ENCODE measurements at regions of chr6 and their contacts with region 1.

Region 1: GRCh38 chr6:131627724-131628682 is at the start of gene MED23:
- DNase-seq: peak; percentile 97
- H3K4me3 Mint-ChIP-seq: peak within 1 kb of the TSS; percentile 99
- H3K27ac Mint-ChIP-seq: peak within 1 kb of the TSS; percentile 85
- H3K4me1 Mint-ChIP-seq: peaks cover 37% of the 10 kb centered on the region
- H3K27me3 Mint-ChIP-seq: no peaks in the 10 kb centered on the region
- total RNA-seq, gene MED23: 25.5 to 26.0 TPM

Region 2: DNA sequence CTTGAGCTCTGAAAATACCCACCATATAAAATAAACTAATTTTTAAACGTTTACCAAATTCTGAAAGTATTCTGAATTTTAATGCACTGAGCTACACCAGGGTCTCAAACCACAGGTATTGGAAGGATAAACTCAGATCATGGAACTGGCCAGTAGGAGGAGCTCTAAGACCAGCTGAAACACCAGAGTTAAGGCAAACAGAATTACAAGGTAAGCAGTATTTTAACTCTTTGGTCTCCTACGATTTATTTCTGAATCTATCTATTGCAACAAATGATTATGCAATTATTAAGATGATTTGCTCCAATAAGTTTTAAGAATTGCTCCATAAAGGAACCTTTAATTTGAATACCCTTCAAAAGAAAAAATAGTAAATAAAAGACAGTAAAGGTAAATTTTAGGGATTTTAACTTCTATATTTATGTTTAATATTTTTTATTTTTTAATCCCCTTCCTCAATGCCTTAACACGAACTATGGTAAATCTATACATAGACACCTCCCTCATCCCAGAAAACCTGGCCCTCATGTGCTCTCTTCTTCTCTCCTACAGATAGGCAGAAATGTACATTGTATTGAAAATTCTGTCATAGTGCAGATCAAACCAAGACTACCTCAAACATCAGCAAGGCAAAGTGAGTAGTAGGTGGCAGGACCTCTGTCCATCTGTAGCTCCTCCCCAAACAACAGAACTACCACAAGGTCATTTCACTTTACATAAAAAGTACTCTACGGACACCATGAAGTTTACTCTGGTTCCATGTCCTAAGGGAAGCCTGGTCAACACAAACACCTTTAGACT is 742.4 kb before region 1 on chr6:
- CTCF ChIA-PET with region 1: interaction called, 12 read pairs
- POLR2A ChIA-PET with region 1: no interaction called
- intact Hi-C with region 1: loop called (anchors 2 kb)
- DNase-seq: peak; percentile 72
- H3K4me3 Mint-ChIP-seq: no peak overlapping the region
- H3K27ac Mint-ChIP-seq: no peak overlapping the region
- H3K4me1 Mint-ChIP-seq: no peaks in the 10 kb centered on the region
- H3K27me3 Mint-ChIP-seq: no peaks in the 10 kb centered on the region

Region 3: DNA sequence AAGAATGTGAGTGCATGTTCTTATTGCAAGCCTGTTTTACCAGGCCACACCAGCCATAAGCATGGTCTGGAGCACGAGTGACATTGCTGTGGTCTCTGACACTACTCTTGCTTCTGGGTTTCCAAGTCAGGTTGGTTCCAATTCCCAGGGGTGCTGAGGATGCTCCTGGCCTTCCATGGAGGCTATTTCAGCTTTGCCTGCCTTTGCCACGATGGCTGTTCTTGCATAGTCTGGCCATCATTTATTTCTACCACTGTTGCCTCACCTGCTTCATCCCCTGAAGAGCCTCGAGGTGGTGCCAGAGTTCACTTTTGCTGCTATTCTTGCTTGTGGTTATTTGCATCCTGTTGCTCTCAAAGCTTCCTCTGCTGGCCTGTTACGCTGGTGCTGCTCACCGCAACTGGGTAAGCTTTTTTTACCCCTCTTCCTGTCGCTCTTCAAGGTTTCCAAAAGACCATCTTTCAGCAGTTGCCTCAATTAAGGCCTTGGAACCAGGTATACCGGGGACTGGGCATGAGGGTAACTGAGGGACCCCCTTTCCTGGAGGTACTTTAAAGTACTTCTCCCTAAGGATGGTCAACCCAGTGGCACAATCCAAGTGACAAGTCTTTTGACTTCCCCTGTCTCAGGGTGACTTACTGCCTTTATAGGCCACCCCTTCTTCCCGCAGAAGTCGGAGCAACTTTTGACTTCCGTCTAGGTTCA is 428.3 kb before region 1 on chr6:
- CTCF ChIA-PET with region 1: interaction called, 13 read pairs
- POLR2A ChIA-PET with region 1: interaction called, 3 read pairs
- intact Hi-C with region 1: loop called (anchors 1 kb)
- DNase-seq: peak; percentile 83
- H3K4me3 Mint-ChIP-seq: peak overlapping the region; percentile 72
- H3K27ac Mint-ChIP-seq: peak overlapping the region; percentile 93
- H3K4me1 Mint-ChIP-seq: peaks cover 58% of the 10 kb centered on the region
- H3K27me3 Mint-ChIP-seq: no peaks in the 10 kb centered on the region

Region 4: GRCh38 chr6:131615275-131615674 is 12.7 kb before region 1 on chr6:
- CTCF ChIA-PET with region 1: interaction called, 24 read pairs
- POLR2A ChIA-PET with region 1: interaction called, 3 read pairs
- intact Hi-C with region 1: no loop called
- DNase-seq: no peak
- H3K4me3 Mint-ChIP-seq: no peak overlapping the region
- H3K27ac Mint-ChIP-seq: no peak overlapping the region
- H3K4me1 Mint-ChIP-seq: peaks cover 8% of the 10 kb centered on the region
- H3K27me3 Mint-ChIP-seq: no peaks in the 10 kb centered on the region

Region 5: GRCh38 chr6:131795366-131795765 is 167.4 kb after region 1 on chr6:
- CTCF ChIA-PET with region 1: no interaction called
- POLR2A ChIA-PET with region 1: no interaction called
- intact Hi-C with region 1: no loop called
- DNase-seq: no peak
- H3K4me3 Mint-ChIP-seq: no peak overlapping the region
- H3K27ac Mint-ChIP-seq: no peak overlapping the region
- H3K4me1 Mint-ChIP-seq: no peaks in the 10 kb centered on the region
- H3K27me3 Mint-ChIP-seq: peaks cover 9% of the 10 kb centered on the region

Region 6: DNA sequence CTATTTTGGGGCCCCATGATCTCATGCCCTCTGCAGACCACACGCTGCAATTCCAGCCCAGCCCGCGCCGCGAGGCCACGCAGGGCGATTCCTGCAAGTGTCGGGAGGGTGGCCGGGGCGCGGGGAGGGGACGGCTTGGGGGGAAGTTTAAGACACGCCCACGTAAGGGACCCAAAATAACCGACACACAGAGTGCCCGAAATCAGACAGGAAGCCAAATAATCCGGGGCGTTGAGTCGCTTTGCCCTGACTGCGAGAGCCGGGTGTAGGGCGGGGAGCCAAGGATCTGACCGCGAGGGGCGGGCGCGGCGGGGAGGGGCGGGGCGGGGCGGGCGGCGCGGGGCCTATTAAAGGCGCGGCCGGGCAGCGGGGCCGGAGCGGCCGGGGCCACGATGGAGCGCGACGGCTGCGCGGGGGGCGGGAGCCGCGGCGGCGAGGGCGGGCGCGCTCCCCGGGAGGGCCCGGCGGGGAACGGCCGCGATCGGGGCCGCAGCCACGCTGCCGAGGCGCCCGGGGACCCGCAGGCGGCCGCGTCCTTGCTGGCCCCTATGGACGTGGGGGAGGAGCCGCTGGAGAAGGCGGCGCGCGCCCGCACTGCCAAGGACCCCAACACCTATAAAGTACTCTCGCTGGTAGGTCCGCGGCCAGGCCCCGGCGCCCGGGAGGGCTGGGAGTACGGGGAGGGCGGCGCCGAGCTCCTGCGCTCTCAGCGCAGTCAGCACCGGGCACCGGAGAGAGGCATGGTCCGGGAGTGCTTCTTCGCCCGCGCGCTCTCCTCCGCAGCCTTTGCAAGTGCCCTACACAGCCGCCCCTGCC is 179.8 kb after region 1 on chr6 and contains the start of gene ENPP1:
- CTCF ChIA-PET with region 1: no interaction called
- POLR2A ChIA-PET with region 1: no interaction called
- intact Hi-C with region 1: loop called (anchors 5 kb)
- DNase-seq: peak; percentile 62
- H3K4me3 Mint-ChIP-seq: peak within 1 kb of the TSS; percentile 81
- H3K27ac Mint-ChIP-seq: no peak within 1 kb of the TSS
- H3K4me1 Mint-ChIP-seq: peaks cover 24% of the 10 kb centered on the region
- H3K27me3 Mint-ChIP-seq: peaks cover 16% of the 10 kb centered on the region
- total RNA-seq, gene ENPP1: 1.1 to 1.4 TPM

Region 7: DNA sequence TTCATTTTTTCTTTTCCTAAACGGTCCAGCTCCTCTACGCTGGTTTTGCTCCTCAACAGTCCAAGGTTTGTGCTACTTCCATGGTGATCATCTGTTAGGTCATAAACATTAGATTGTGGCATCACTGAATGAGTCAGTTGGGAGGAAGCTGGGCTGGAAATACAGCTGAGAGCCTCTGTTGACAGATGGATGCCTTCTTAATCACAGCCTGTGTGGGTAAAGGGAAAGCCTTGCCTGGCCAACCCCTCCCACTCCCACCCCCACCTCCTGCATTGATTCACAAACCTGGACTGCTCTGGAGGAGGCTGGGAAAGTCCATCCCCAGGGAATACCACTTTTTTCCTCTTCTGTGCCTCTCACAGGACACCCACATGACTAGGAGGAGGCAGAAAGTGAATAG is 503.8 kb after region 1 on chr6:
- CTCF ChIA-PET with region 1: no interaction called
- POLR2A ChIA-PET with region 1: no interaction called
- intact Hi-C with region 1: no loop called
- DNase-seq: no peak
- H3K4me3 Mint-ChIP-seq: no peak overlapping the region
- H3K27ac Mint-ChIP-seq: no peak overlapping the region
- H3K4me1 Mint-ChIP-seq: no peaks in the 10 kb centered on the region
- H3K27me3 Mint-ChIP-seq: peaks cover 8% of the 10 kb centered on the region

Region 8: DNA sequence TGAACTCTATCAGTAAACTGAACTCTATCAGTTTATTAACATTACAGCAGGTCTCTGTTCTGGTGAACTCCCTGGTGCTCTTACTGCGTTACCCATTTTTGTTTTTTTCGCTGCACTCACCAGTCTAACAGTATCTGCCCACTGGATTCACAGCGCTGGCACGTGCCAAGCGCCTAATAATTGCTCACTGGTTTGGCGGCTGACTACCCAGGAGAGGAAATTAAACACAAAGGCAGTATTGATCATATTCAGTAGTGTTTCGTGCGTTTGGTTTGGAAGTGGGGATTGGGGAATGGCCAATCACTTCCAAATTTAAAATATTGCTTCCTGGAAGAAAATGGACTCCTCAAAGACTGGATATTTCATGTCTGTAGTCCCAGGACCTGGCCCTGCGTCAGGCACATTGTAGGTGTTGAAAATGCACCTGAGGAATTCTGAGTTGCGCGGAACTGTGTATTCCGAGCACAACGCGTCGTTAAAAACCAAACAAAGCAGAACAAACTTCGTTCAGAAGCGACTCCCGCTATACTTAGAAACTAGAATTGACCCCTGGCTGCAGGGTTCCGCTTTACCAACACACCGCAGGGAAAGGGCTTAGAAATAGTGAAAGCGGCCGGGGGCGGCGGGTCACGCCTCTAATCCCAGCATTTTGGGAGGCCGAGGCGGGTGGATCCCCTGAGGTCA is 1185.3 kb after region 1 on chr6:
- CTCF ChIA-PET with region 1: no interaction called
- POLR2A ChIA-PET with region 1: no interaction called
- intact Hi-C with region 1: loop called (anchors 5 kb)
- DNase-seq: peak; percentile 68
- H3K4me3 Mint-ChIP-seq: peak overlapping the region; percentile 97
- H3K27ac Mint-ChIP-seq: peak overlapping the region; percentile 98
- H3K4me1 Mint-ChIP-seq: peaks cover 28% of the 10 kb centered on the region
- H3K27me3 Mint-ChIP-seq: peaks cover 2% of the 10 kb centered on the region

Measured in activated CD4-positive, alpha-beta memory T cell treated with anti-CD3 and anti-CD28 coated beads for 36 hours (primary cell).